PC-3 (cell line): ENCODE measurements at regions of chr4 and their contacts with region 1.

Region 1: GRCh38 chr4:56698329-56698728 is 17.2 kb upstream of the HOPX start:
- DNase-seq: no peak
- ATAC-seq: no peak
- H3K4me3 ChIP-seq: no peak overlapping the region
- H3K27ac ChIP-seq: no peak overlapping the region
- H3K4me1 ChIP-seq: peaks cover 5% of the 10 kb centered on the region
- H3K27me3 ChIP-seq: no peaks in the 10 kb centered on the region
- CTCF ChIP-seq: no peak

Region 2: GRCh38 chr4:56575820-56576429 is 122.4 kb before region 1 on chr4:
- CTCF ChIA-PET with region 1: no interaction called
- POLR2A ChIA-PET with region 1: no interaction called
- intact Hi-C with region 1: loop called (anchors 5 kb)
- DNase-seq: peak; percentile 67
- ATAC-seq: peak; percentile 83
- H3K4me3 ChIP-seq: no peak overlapping the region
- H3K27ac ChIP-seq: no peak overlapping the region
- H3K4me1 ChIP-seq: no peaks in the 10 kb centered on the region
- H3K27me3 ChIP-seq: no peaks in the 10 kb centered on the region
- CTCF ChIP-seq: peak; percentile 84